Sigmoid colon (tissue), 7 donors: ENCODE measurements at regions of chr15 and their contacts with region 1.

Region 1: GRCh38 chr15:91224755-91225380 is 124.8 kb downstream of the SV2B start:
- DNase-seq: no peak
- H3K4me3 ChIP-seq: no peak overlapping the region
- H3K27ac ChIP-seq: no peak overlapping the region
- H3K4me1 ChIP-seq: peaks cover 0 to 5% (median 0%) of the 10 kb centered on the region in 4 donors
- H3K27me3 ChIP-seq: peaks cover 0 to 8% (median 0%) of the 10 kb centered on the region in 3 donors
- CTCF ChIP-seq: peak in 3 of 4 experiments; percentile 23 to 50 (median 41)
- EP300 ChIP-seq: no peak
- POLR2A ChIP-seq: no peak

Region 2: DNA sequence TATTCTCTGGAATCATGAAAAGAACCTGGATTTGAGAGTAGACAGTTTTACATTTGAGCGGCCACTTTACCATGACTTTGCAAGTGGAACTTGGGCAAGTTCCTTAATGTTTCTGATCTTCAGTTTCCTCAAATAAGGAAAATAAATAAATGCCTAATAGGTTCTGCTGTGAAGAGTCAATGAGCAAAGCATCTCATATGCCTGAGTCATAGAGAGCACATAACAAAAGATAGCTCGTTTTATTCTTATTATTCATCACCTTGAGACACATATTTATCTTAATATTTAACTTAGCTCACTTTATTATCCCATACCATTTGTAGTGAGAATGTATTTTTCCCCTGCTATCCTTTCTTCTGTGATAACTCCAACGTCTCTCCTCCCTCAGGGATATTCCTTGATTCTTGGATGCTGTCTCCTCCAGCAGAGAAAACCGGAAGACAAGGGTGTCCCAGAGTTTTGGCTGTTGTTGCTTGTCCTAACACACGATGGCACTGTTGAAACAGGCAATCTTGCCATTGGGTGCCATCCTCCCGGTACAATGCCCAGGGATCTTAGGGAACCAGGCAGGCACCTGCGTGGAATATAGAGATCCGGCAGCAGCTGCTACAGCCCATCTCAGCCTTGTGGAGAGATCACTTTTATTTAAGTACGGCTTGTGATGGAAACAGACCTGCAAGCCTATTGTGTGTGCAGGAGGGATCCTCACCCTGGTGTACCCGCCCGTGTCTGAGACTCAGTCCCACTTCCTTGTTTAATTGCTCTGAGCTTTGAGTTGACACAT is 169.1 kb before region 1 on chr15:
- intact Hi-C with region 1: loop called (anchors 5 kb)
- DNase-seq: peak; percentile 72
- H3K4me3 ChIP-seq: no peak overlapping the region
- H3K27ac ChIP-seq: no peak overlapping the region
- H3K4me1 ChIP-seq: peaks cover 0 to 4% (median 0%) of the 10 kb centered on the region in 4 donors
- H3K27me3 ChIP-seq: peaks cover 0 to 53% (median 0%) of the 10 kb centered on the region in 3 donors
- CTCF ChIP-seq: peak; percentile 43 to 71 (median 57)
- EP300 ChIP-seq: no peak
- POLR2A ChIP-seq: no peak

Region 3: GRCh38 chr15:91535856-91536500 is 311.1 kb after region 1 on chr15:
- intact Hi-C with region 1: no loop called
- DNase-seq: no peak
- H3K4me3 ChIP-seq: no peak overlapping the region
- H3K27ac ChIP-seq: peak overlapping the region in 3 of 4 donors; percentile 17 to 36 (median 34)
- H3K4me1 ChIP-seq: peaks cover 0 to 24% (median 11%) of the 10 kb centered on the region in 4 donors
- H3K27me3 ChIP-seq: no peaks in the 10 kb centered on the region
- CTCF ChIP-seq: no peak
- EP300 ChIP-seq: no peak
- POLR2A ChIP-seq: no peak

Region 4: DNA sequence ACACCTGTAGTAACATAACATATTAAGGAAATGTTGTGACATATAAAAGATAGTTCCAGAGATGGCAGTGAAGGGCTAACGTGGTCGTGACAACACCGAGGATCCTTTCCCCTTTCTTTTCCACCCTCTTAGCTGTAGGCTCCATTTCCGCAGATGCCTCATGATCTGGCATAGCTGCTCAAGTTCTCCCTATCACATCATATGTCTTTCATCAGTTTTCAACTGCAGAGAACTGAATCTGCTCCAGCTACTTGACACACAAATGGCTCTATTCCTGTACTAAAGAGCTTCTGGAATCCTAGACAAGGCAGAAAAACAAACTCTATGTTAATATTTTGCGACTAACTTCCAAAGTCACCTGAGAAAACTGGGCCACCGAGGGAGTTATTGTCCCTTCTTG is 353.6 kb after region 1 on chr15:
- intact Hi-C with region 1: no loop called
- DNase-seq: no peak
- H3K4me3 ChIP-seq: no peak overlapping the region
- H3K27ac ChIP-seq: no peak overlapping the region
- H3K4me1 ChIP-seq: no peaks in the 10 kb centered on the region
- H3K27me3 ChIP-seq: no peaks in the 10 kb centered on the region
- CTCF ChIP-seq: no peak
- EP300 ChIP-seq: no peak
- POLR2A ChIP-seq: no peak